Activated B cell treated with CpG ODN at 0.5 μM for 24 hours (primary cell): ENCODE measurements at regions of chr15 and their contacts with region 1.

Region 1: GRCh38 chr15:64153480-64154367 is 2.2 kb downstream of the SNX22 start:
- DNase-seq: peak; percentile 92
- ATAC-seq: peak; percentile 80
- H3K4me3 Mint-ChIP-seq: peak overlapping the region; percentile 86
- H3K27ac Mint-ChIP-seq: peak overlapping the region; percentile 91
- H3K4me1 Mint-ChIP-seq: peaks cover 69% of the 10 kb centered on the region
- H3K27me3 Mint-ChIP-seq: no peaks in the 10 kb centered on the region
- CTCF ChIP-seq: peak; percentile 61

Region 2: GRCh38 chr15:63157118-63157843 is 996.4 kb before region 1 on chr15 and contains the start of gene RPS27L:
- CTCF ChIA-PET with region 1: no interaction called
- POLR2A ChIA-PET with region 1: no interaction called
- intact Hi-C with region 1: no loop called
- DNase-seq: peak; percentile 81
- ATAC-seq: peak; percentile 95
- H3K4me3 Mint-ChIP-seq: peak within 1 kb of the TSS; percentile 98
- H3K27ac Mint-ChIP-seq: peak within 1 kb of the TSS; percentile 97
- H3K4me1 Mint-ChIP-seq: peaks cover 27% of the 10 kb centered on the region
- H3K27me3 Mint-ChIP-seq: no peaks in the 10 kb centered on the region
- CTCF ChIP-seq: no peak
- total RNA-seq, gene RPS27L: 70.8 and 74.9 TPM in 2 replicates

Region 3: DNA sequence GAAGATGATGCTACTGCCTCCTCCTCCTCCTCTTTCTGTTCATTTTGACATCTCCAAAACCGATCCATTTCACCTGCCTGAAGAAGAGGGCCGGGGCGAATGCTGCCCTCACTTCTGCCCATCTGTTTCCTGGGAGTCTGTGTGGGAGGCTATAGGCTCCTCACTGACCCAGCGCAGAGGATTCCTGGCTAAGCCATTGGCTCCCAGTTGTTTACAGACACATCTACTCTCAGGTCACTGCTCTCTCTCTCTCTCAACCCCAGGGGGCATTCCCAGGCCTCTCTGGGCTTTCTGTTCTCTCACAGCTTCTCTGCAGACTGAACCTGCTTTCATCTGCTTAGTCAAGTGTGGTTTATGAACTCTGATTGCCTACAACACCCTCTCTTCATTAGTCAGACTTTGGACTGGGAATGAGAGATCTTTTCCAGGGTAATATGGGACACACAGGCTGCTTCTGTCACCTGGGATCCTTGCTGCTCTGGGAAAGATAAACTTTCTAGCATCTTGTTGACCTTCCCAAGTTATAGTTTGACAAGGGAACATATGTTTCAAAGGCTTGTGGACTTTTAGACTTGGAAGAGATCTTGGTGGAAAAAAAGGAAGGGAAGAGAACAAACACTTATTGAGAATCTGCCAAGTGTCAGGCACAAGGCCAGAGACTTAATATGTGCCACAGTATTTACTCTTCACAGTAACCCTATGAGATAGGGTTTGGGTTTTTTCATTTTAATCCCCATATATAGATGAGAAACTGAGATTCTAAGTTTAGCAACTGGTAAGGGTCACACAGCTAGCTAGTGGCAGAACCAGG is 679.5 kb before region 1 on chr15:
- CTCF ChIA-PET with region 1: no interaction called
- POLR2A ChIA-PET with region 1: no interaction called
- intact Hi-C with region 1: loop called (anchors 1 kb)
- DNase-seq: peak; percentile 59
- ATAC-seq: peak; percentile 64
- H3K4me3 Mint-ChIP-seq: peak overlapping the region; percentile 83
- H3K27ac Mint-ChIP-seq: peak overlapping the region; percentile 99
- H3K4me1 Mint-ChIP-seq: peaks cover 75% of the 10 kb centered on the region
- H3K27me3 Mint-ChIP-seq: no peaks in the 10 kb centered on the region
- CTCF ChIP-seq: no peak

Region 4: DNA sequence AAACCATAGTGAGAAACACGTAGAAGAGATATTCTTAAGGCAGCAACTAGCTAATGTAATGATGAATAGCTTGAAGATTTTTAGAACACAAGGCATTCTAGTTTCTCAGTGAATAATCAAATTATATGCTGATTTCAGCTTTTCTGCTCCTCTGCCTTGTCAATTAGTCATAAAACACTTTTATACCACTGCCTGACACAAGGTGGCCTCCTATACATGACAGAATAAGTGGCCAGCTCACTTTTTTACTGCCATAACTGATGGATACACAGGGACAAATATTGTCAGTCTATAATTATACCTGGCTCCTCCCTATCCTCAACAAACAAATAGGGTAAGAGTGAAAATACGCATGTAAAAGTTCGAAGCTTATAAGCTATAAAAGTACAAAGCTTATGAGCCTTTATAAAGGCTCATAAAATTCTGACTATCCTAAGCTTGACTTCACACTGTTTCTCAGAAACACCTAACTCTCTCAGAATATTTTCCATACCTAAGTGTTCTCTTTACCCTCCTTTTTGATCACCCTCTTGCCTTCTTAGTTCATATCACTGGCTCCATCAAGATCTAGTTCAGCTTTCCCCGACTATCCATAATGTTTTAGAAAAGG is 401.5 kb before region 1 on chr15:
- CTCF ChIA-PET with region 1: interaction called, 18 read pairs
- POLR2A ChIA-PET with region 1: no interaction called
- intact Hi-C with region 1: loop called (anchors 1 kb)
- DNase-seq: no peak
- ATAC-seq: peak; percentile 83
- H3K4me3 Mint-ChIP-seq: no peak overlapping the region
- H3K27ac Mint-ChIP-seq: peak overlapping the region; percentile 59
- H3K4me1 Mint-ChIP-seq: peaks cover 3% of the 10 kb centered on the region
- H3K27me3 Mint-ChIP-seq: no peaks in the 10 kb centered on the region
- CTCF ChIP-seq: no peak

Region 5: DNA sequence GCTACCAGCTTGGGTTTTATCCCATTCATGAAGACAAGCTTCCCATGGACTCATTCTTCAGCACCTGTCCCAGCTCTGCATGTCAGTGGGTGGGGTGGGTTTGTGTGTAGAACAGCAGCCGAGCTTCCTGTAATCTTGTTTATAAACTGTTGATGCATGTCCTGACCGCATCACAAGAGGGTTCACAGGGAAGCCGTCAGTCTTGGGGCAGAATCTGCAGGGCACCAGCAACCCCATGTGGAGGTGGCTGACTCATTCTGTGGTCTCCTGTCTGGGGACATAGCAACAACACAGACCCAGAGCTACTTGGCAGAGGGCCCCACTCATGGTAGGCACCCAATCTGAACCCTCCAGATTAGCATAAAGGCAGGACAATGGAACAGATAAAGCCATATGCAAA is 143.0 kb before region 1 on chr15:
- CTCF ChIA-PET with region 1: interaction called, 3 read pairs
- POLR2A ChIA-PET with region 1: no interaction called
- intact Hi-C with region 1: loop called (anchors 2 kb)
- DNase-seq: peak; percentile 61
- ATAC-seq: peak; percentile 97
- H3K4me3 Mint-ChIP-seq: peak overlapping the region; percentile 69
- H3K27ac Mint-ChIP-seq: peak overlapping the region; percentile 89
- H3K4me1 Mint-ChIP-seq: peaks cover 32% of the 10 kb centered on the region
- H3K27me3 Mint-ChIP-seq: no peaks in the 10 kb centered on the region
- CTCF ChIP-seq: no peak

Region 6: GRCh38 chr15:64284042-64284441 is 130.3 kb after region 1 on chr15:
- CTCF ChIA-PET with region 1: no interaction called
- POLR2A ChIA-PET with region 1: no interaction called
- intact Hi-C with region 1: no loop called
- DNase-seq: no peak
- ATAC-seq: no peak
- H3K4me3 Mint-ChIP-seq: no peak overlapping the region
- H3K27ac Mint-ChIP-seq: no peak overlapping the region
- H3K4me1 Mint-ChIP-seq: peaks cover 5% of the 10 kb centered on the region
- H3K27me3 Mint-ChIP-seq: no peaks in the 10 kb centered on the region
- CTCF ChIP-seq: no peak

Region 7: GRCh38 chr15:64836023-64836536 is 682.4 kb after region 1 on chr15:
- CTCF ChIA-PET with region 1: no interaction called
- POLR2A ChIA-PET with region 1: no interaction called
- intact Hi-C with region 1: loop called (anchors 10 kb)
- DNase-seq: no peak
- ATAC-seq: no peak
- H3K4me3 Mint-ChIP-seq: peak overlapping the region; percentile 60
- H3K27ac Mint-ChIP-seq: peak overlapping the region; percentile 50
- H3K4me1 Mint-ChIP-seq: peaks cover 23% of the 10 kb centered on the region
- H3K27me3 Mint-ChIP-seq: no peaks in the 10 kb centered on the region
- CTCF ChIP-seq: no peak